Sigmoid colon (tissue), 7 donors: ENCODE measurements at regions of chr14 and their contacts with region 1.

Region 1: GRCh38 chr14:51094901-51095853 is at the start of gene TRIM9:
- DNase-seq: peak; percentile 98
- H3K4me3 ChIP-seq: peak within 1 kb of the TSS; percentile 62 to 69 (median 64)
- H3K27ac ChIP-seq: peak within 1 kb of the TSS; percentile 54 to 89 (median 88)
- H3K4me1 ChIP-seq: peaks cover 0 to 45% (median 35%) of the 10 kb centered on the region in 4 donors
- H3K27me3 ChIP-seq: peaks cover 0 to 5% (median 0%) of the 10 kb centered on the region in 3 donors
- CTCF ChIP-seq: no peak
- EP300 ChIP-seq: no peak
- POLR2A ChIP-seq: peak; percentile 49 to 63
- total RNA-seq, gene TRIM9: 13.5 to 21.0 (median 17.0) TPM

Region 2: DNA sequence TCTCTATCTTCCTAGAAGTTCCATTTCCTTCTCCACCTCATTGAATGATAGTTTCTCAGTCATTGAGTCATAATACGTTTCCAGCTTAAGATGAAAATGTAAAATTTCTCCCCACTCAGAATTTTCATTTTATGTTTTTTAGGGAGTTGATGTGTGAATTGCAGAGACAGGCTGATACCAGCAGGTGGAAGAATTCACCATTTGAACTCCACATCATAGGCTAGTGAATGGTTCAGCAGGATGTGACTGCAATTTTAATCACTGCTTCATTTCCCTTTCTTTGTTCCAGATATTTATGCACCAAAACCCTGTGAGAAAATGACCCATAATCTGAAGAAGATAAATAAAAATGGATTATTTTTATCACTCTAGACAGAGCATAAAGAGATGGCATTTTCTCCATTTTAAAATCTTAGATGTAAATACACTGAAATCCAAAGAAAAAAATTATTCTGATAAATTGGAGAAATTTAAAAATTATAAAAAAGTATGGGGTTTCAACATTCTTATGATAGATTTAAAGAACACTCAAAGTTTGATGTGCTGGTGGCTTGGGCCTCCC is 140.3 kb before region 1 on chr14:
- intact Hi-C with region 1: loop called (anchors 2 kb)
- DNase-seq: no peak
- H3K4me3 ChIP-seq: no peak overlapping the region
- H3K27ac ChIP-seq: peak overlapping the region in 3 of 4 donors; percentile 56 to 81 (median 73)
- H3K4me1 ChIP-seq: peaks cover 0 to 12% (median 10%) of the 10 kb centered on the region in 4 donors
- H3K27me3 ChIP-seq: no peaks in the 10 kb centered on the region
- CTCF ChIP-seq: peak; percentile 74 to 84 (median 79)
- EP300 ChIP-seq: no peak
- POLR2A ChIP-seq: no peak

Region 3: GRCh38 chr14:51004801-51005526 is 90.2 kb before region 1 on chr14:
- intact Hi-C with region 1: loop called (anchors 5 kb)
- DNase-seq: no peak
- H3K4me3 ChIP-seq: no peak overlapping the region
- H3K27ac ChIP-seq: peak overlapping the region in 3 of 4 donors; percentile 69 to 79 (median 75)
- H3K4me1 ChIP-seq: peaks cover 0 to 55% (median 35%) of the 10 kb centered on the region in 4 donors
- H3K27me3 ChIP-seq: no peaks in the 10 kb centered on the region
- CTCF ChIP-seq: no peak
- EP300 ChIP-seq: no peak
- POLR2A ChIP-seq: no peak

Region 4: GRCh38 chr14:51020024-51020710 is 75.0 kb before region 1 on chr14:
- intact Hi-C with region 1: loop called (anchors 5 kb)
- DNase-seq: no peak
- H3K4me3 ChIP-seq: no peak overlapping the region
- H3K27ac ChIP-seq: peak overlapping the region in 3 of 4 donors; percentile 22 to 38 (median 22)
- H3K4me1 ChIP-seq: peaks cover 0 to 66% (median 50%) of the 10 kb centered on the region in 4 donors
- H3K27me3 ChIP-seq: no peaks in the 10 kb centered on the region
- CTCF ChIP-seq: no peak
- EP300 ChIP-seq: no peak
- POLR2A ChIP-seq: no peak

Region 5: DNA sequence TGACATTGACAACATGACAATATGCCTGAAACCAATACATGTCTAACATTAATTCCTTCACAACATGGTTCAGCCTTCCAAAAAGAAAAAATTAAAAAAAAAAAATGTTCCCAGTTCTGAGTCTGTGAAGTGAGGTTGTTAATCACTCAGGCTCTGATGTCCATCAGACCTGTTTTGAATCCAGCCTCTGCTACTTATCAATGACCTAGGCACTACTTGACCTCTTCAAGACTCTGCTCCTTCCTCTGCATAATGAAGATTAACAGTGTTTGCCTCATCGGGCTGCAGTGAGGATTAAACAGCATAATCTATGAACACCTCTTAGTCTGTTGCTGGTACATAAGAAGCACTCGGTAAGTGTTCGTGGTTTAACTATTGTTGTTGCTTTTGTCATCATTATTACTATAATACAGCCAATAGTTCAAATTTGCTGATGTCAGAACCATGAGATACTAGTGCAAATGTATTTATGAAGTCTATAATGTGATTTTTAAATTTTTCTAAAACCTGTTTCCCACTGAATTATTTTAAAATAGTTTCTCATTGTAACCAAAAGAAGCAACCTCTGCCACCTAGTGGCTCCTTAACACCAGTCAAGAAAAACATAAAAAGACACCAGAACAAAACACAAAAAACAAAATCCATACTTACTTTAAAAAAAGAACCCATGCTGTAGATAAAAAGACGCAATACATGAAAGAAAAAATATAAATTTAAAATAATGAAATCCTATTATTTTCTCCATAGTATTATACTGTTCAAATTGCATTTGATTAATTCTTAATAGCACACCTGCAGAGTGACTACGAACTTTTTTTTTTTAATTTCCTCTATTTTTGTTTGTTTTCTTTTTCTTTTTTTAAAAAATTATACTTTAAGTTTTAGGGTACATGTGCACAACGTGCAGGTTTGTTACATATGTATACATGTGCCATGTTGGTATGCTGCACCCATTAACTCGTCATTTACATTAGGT is 124.6 kb after region 1 on chr14:
- intact Hi-C with region 1: loop called (anchors 5 kb)
- DNase-seq: no peak
- H3K4me3 ChIP-seq: no peak overlapping the region
- H3K27ac ChIP-seq: no peak overlapping the region
- H3K4me1 ChIP-seq: no peaks in the 10 kb centered on the region
- H3K27me3 ChIP-seq: no peaks in the 10 kb centered on the region
- CTCF ChIP-seq: peak; percentile 34 to 67 (median 62)
- EP300 ChIP-seq: no peak
- POLR2A ChIP-seq: no peak